Activated T-helper 2 cell treated with anti-CD3 and anti-CD28 coated beads, Interferon-gamma antibody, Interleukin-2, Interleukin-4, amounts not matched to agents 10 μg/mL and 5 μg/mL and 100 μg/mL, durations not matched to agents 14 hours and 24 hours and 36 hours (primary cell): ENCODE measurements at regions of chr3 and their contacts with region 1.

Region 1: DNA sequence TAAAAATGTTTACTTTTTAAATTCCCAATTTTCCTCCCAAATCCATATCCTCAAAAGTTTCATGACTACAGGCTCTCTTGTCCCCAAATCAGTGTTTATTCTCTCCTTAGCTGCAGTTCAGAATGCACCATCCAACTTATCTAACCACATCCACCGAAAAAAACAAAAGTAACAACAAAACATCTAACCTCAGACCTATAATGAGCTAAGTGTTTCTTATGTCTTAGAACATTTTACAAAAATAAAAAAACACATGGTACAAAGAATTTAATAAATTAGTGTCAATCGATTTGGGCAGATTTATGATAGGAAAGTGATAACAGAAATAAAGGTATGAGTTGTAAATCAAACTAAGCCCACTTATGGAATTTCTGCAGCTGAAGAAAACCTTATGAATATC is 13.6 kb downstream of the SATB1 start:
- DNase-seq: no peak
- H3K4me3 Mint-ChIP-seq: peak overlapping the region; percentile 70
- H3K27ac Mint-ChIP-seq: peak overlapping the region; percentile 83
- H3K4me1 Mint-ChIP-seq: peaks cover 82% of the 10 kb centered on the region
- H3K27me3 Mint-ChIP-seq: no peaks in the 10 kb centered on the region

Region 2: GRCh38 chr3:18007980-18008379 is 403.6 kb before region 1 on chr3:
- intact Hi-C with region 1: no loop called
- DNase-seq: no peak
- H3K4me3 Mint-ChIP-seq: no peak overlapping the region
- H3K27ac Mint-ChIP-seq: no peak overlapping the region
- H3K4me1 Mint-ChIP-seq: no peaks in the 10 kb centered on the region
- H3K27me3 Mint-ChIP-seq: peaks cover 2% of the 10 kb centered on the region

Region 3: GRCh38 chr3:18424729-18425640 is 13.4 kb after region 1 on chr3 and contains the start of gene SATB1:
- intact Hi-C with region 1: loop called (anchors 1 kb)
- DNase-seq: peak; percentile 63
- H3K4me3 Mint-ChIP-seq: peak within 1 kb of the TSS; percentile 89
- H3K27ac Mint-ChIP-seq: peak within 1 kb of the TSS; percentile 93
- H3K4me1 Mint-ChIP-seq: peaks cover 62% of the 10 kb centered on the region
- H3K27me3 Mint-ChIP-seq: no peaks in the 10 kb centered on the region
- total RNA-seq, gene SATB1: 831 and 866 TPM in 2 replicates